CD8-positive, alpha-beta T cell (primary cell): ENCODE measurements at regions of chr9 and their contacts with region 1.

Region 1: DNA sequence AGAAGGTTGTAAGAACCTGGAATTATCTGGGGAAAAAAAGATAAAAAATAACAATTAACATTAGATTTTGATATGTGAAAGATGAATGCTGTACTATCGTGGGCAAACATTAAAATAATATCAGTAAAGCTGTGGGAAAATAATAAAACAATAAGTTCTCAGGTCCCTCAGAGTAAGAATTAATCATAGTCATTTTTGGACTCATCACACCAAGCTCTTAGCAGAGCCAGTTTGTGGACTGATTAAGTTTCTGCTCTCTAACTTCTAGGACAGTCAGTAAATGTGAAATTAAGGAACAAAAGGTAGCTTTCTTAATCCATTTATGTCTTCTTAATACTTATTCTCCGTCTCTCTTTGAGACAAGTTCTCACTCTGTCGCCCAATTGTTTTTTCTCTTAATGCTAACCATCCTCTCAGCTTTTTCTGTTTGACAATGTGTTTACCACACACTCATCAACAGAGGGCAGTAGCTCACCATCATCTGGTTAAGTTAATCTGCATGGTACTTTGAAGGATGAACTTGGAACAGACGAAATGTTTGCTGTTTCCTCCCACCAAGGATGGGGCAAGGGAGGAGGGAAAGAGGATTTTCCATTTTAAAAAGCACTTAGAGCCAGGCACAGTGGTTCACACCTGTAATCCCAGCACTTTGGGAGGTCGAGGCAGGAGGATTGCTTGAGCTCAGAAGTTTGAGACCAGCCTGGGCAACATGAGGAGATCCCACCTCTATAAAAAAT is 5.3 kb upstream of the ACO1 start:
- DNase-seq: peak in 8 of 9 experiments; percentile 6 to 86 (median 52)
- ATAC-seq: peak; percentile 90
- H3K4me3 ChIP-seq: no peak overlapping the region
- H3K4me3 Mint-ChIP-seq: peak overlapping the region; percentile 0
- H3K27ac ChIP-seq: no peak overlapping the region
- H3K27ac Mint-ChIP-seq: no peak overlapping the region
- H3K4me1 ChIP-seq: peaks cover 12% of the 10 kb centered on the region
- H3K4me1 Mint-ChIP-seq: peaks cover 16% of the 10 kb centered on the region
- H3K27me3 ChIP-seq: no peaks in the 10 kb centered on the region
- H3K27me3 Mint-ChIP-seq: peaks cover 14% of the 10 kb centered on the region
- CTCF ChIP-seq: peak; percentile 63

Region 2: GRCh38 chr9:31574006-31574765 is 805.0 kb before region 1 on chr9:
- CTCF ChIA-PET with region 1: no interaction called
- POLR2A ChIA-PET with region 1: no interaction called
- intact Hi-C with region 1: no loop called
- DNase-seq: no peak
- ATAC-seq: no peak
- H3K4me3 ChIP-seq: no peak overlapping the region
- H3K4me3 Mint-ChIP-seq: no peak overlapping the region
- H3K27ac ChIP-seq: no peak overlapping the region
- H3K27ac Mint-ChIP-seq: no peak overlapping the region
- H3K4me1 ChIP-seq: no peaks in the 10 kb centered on the region
- H3K4me1 Mint-ChIP-seq: no peaks in the 10 kb centered on the region
- H3K27me3 ChIP-seq: no peaks in the 10 kb centered on the region
- H3K27me3 Mint-ChIP-seq: no peaks in the 10 kb centered on the region
- CTCF ChIP-seq: no peak

Region 3: GRCh38 chr9:32360983-32361673 is 18.0 kb before region 1 on chr9:
- CTCF ChIA-PET with region 1: no interaction called
- POLR2A ChIA-PET with region 1: no interaction called
- intact Hi-C with region 1: no loop called
- DNase-seq: no peak
- ATAC-seq: no peak
- H3K4me3 ChIP-seq: no peak overlapping the region
- H3K4me3 Mint-ChIP-seq: no peak overlapping the region
- H3K27ac ChIP-seq: no peak overlapping the region
- H3K27ac Mint-ChIP-seq: no peak overlapping the region
- H3K4me1 ChIP-seq: no peaks in the 10 kb centered on the region
- H3K4me1 Mint-ChIP-seq: no peaks in the 10 kb centered on the region
- H3K27me3 ChIP-seq: no peaks in the 10 kb centered on the region
- H3K27me3 Mint-ChIP-seq: peaks cover 14% of the 10 kb centered on the region
- CTCF ChIP-seq: no peak

Region 4: GRCh38 chr9:32426278-32426939 is 47.2 kb after region 1 on chr9:
- CTCF ChIA-PET with region 1: interaction called, 104 read pairs
- POLR2A ChIA-PET with region 1: no interaction called
- intact Hi-C with region 1: no loop called
- DNase-seq: no peak
- ATAC-seq: no peak
- H3K4me3 ChIP-seq: no peak overlapping the region
- H3K4me3 Mint-ChIP-seq: no peak overlapping the region
- H3K27ac ChIP-seq: no peak overlapping the region
- H3K27ac Mint-ChIP-seq: no peak overlapping the region
- H3K4me1 ChIP-seq: no peaks in the 10 kb centered on the region
- H3K4me1 Mint-ChIP-seq: no peaks in the 10 kb centered on the region
- H3K27me3 ChIP-seq: no peaks in the 10 kb centered on the region
- H3K27me3 Mint-ChIP-seq: no peaks in the 10 kb centered on the region
- CTCF ChIP-seq: no peak

Region 5: GRCh38 chr9:32526041-32526706 is 147.0 kb after region 1 on chr9 and contains the start of gene RIGI:
- CTCF ChIA-PET with region 1: interaction called, 91 read pairs
- POLR2A ChIA-PET with region 1: interaction called, 16 read pairs
- intact Hi-C with region 1: loop called (anchors 1 to 5 kb)
- DNase-seq: peak; percentile 47 to 94 (median 80)
- ATAC-seq: peak; percentile 79
- H3K4me3 ChIP-seq: peak within 1 kb of the TSS; percentile 79 to 85
- H3K4me3 Mint-ChIP-seq: peak within 1 kb of the TSS; percentile 98
- H3K27ac ChIP-seq: peak within 1 kb of the TSS; percentile 85 to 86
- H3K27ac Mint-ChIP-seq: peak within 1 kb of the TSS; percentile 98
- H3K4me1 ChIP-seq: peaks cover 22% of the 10 kb centered on the region
- H3K4me1 Mint-ChIP-seq: peaks cover 55% of the 10 kb centered on the region
- H3K27me3 ChIP-seq: no peaks in the 10 kb centered on the region
- H3K27me3 Mint-ChIP-seq: no peaks in the 10 kb centered on the region
- CTCF ChIP-seq: peak; percentile 60
- total RNA-seq, gene RIGI: 3.4 to 3.9 TPM

Region 6: GRCh38 chr9:32571969-32572899 is 193.1 kb after region 1 on chr9:
- CTCF ChIA-PET with region 1: interaction called, 392 read pairs
- POLR2A ChIA-PET with region 1: interaction called, 19 read pairs
- intact Hi-C with region 1: loop called in 1 of 2 experiments (anchors 1 kb)
- DNase-seq: peak; percentile 49 to 91 (median 76)
- ATAC-seq: peak; percentile 80
- H3K4me3 ChIP-seq: peak overlapping the region; percentile 83 to 89
- H3K4me3 Mint-ChIP-seq: peak overlapping the region; percentile 99
- H3K27ac ChIP-seq: peak overlapping the region; percentile 83 to 85
- H3K27ac Mint-ChIP-seq: peak overlapping the region; percentile 97
- H3K4me1 ChIP-seq: peaks cover 13% of the 10 kb centered on the region
- H3K4me1 Mint-ChIP-seq: peaks cover 33% of the 10 kb centered on the region
- H3K27me3 ChIP-seq: no peaks in the 10 kb centered on the region
- H3K27me3 Mint-ChIP-seq: no peaks in the 10 kb centered on the region
- CTCF ChIP-seq: peak; percentile 71

Region 7: DNA sequence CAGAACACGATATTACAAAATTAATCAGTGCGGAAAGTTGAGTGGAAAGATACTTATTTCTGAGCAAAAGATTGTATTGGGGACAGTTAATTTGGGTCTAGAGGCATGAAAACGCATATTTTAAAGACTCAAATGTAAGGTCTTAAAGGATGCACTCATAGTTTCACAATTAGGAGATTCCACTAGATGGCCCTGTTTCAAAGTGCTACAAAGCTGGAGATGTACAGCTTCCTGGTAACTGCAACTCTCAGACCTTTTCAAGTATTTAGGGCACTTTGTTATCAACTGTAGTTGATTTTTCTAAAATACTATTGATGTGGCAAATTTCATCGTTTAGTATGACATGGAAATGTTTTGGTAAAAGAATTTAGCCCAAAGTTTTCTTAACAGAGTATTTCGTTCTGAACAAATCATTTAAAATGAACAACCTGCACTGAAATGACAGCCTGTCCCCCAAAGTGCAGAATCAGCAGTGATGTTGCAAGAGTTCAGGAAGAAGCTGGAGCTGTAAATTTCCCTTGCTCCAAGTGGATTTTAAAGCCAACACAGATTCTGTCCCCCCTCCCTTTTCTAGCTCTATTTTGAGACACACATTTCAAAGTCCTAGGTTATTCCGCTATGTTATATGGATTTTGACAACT is 210.0 kb after region 1 on chr9:
- CTCF ChIA-PET with region 1: interaction called, 392 read pairs
- POLR2A ChIA-PET with region 1: interaction called, 4 read pairs
- intact Hi-C with region 1: no loop called
- DNase-seq: peak in 2 of 9 experiments; percentile 21 to 38
- ATAC-seq: no peak
- H3K4me3 ChIP-seq: no peak overlapping the region
- H3K4me3 Mint-ChIP-seq: no peak overlapping the region
- H3K27ac ChIP-seq: no peak overlapping the region
- H3K27ac Mint-ChIP-seq: no peak overlapping the region
- H3K4me1 ChIP-seq: no peaks in the 10 kb centered on the region
- H3K4me1 Mint-ChIP-seq: no peaks in the 10 kb centered on the region
- H3K27me3 ChIP-seq: peaks cover 0 to 3% of the 10 kb centered on the region in 2 experiments
- H3K27me3 Mint-ChIP-seq: peaks cover 35% of the 10 kb centered on the region
- CTCF ChIP-seq: no peak

Region 8: GRCh38 chr9:32764140-32764539 is 385.0 kb after region 1 on chr9:
- CTCF ChIA-PET with region 1: no interaction called
- POLR2A ChIA-PET with region 1: no interaction called
- intact Hi-C with region 1: no loop called
- DNase-seq: no peak
- ATAC-seq: no peak
- H3K4me3 ChIP-seq: no peak overlapping the region
- H3K4me3 Mint-ChIP-seq: no peak overlapping the region
- H3K27ac ChIP-seq: no peak overlapping the region
- H3K27ac Mint-ChIP-seq: no peak overlapping the region
- H3K4me1 ChIP-seq: no peaks in the 10 kb centered on the region
- H3K4me1 Mint-ChIP-seq: no peaks in the 10 kb centered on the region
- H3K27me3 ChIP-seq: no peaks in the 10 kb centered on the region
- H3K27me3 Mint-ChIP-seq: peaks cover 10% of the 10 kb centered on the region
- CTCF ChIP-seq: no peak

Region 9: DNA sequence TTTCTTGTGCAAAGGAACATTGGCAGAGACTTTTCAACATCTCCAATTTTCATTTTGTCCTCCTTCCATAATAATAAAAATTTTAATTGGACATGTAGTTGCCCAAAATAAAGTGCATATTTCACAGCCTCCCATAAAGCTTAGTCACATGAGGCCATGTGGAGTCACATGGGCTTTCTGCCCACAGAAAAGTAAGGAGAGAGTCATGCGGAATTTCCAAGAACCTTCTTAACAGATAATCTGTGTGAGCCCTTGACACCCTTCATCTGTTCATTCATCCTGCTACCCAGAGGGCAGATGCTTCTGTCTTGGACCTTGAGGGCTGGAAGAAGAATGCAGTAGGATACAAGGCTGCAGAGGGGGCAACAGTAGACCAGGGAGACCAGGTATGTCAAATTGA is 561.6 kb after region 1 on chr9:
- CTCF ChIA-PET with region 1: no interaction called
- POLR2A ChIA-PET with region 1: no interaction called
- intact Hi-C with region 1: no loop called
- DNase-seq: no peak
- ATAC-seq: no peak
- H3K4me3 ChIP-seq: no peak overlapping the region
- H3K4me3 Mint-ChIP-seq: no peak overlapping the region
- H3K27ac ChIP-seq: no peak overlapping the region
- H3K27ac Mint-ChIP-seq: no peak overlapping the region
- H3K4me1 ChIP-seq: no peaks in the 10 kb centered on the region
- H3K4me1 Mint-ChIP-seq: no peaks in the 10 kb centered on the region
- H3K27me3 ChIP-seq: no peaks in the 10 kb centered on the region
- H3K27me3 Mint-ChIP-seq: no peaks in the 10 kb centered on the region
- CTCF ChIP-seq: no peak

Region 10: GRCh38 chr9:33225319-33226149 is 846.4 kb after region 1 on chr9:
- CTCF ChIA-PET with region 1: no interaction called
- POLR2A ChIA-PET with region 1: no interaction called
- intact Hi-C with region 1: loop called in 1 of 2 experiments (anchors 5 kb)
- DNase-seq: peak; percentile 44 to 82 (median 74)
- ATAC-seq: peak; percentile 86
- H3K4me3 ChIP-seq: no peak overlapping the region
- H3K4me3 Mint-ChIP-seq: no peak overlapping the region
- H3K27ac ChIP-seq: no peak overlapping the region
- H3K27ac Mint-ChIP-seq: no peak overlapping the region
- H3K4me1 ChIP-seq: no peaks in the 10 kb centered on the region
- H3K4me1 Mint-ChIP-seq: peaks cover 13% of the 10 kb centered on the region
- H3K27me3 ChIP-seq: no peaks in the 10 kb centered on the region
- H3K27me3 Mint-ChIP-seq: peaks cover 2% of the 10 kb centered on the region
- CTCF ChIP-seq: peak; percentile 78